ENCODE measurements at regions of chr7 and their contacts with region 1.

Region 1: DNA sequence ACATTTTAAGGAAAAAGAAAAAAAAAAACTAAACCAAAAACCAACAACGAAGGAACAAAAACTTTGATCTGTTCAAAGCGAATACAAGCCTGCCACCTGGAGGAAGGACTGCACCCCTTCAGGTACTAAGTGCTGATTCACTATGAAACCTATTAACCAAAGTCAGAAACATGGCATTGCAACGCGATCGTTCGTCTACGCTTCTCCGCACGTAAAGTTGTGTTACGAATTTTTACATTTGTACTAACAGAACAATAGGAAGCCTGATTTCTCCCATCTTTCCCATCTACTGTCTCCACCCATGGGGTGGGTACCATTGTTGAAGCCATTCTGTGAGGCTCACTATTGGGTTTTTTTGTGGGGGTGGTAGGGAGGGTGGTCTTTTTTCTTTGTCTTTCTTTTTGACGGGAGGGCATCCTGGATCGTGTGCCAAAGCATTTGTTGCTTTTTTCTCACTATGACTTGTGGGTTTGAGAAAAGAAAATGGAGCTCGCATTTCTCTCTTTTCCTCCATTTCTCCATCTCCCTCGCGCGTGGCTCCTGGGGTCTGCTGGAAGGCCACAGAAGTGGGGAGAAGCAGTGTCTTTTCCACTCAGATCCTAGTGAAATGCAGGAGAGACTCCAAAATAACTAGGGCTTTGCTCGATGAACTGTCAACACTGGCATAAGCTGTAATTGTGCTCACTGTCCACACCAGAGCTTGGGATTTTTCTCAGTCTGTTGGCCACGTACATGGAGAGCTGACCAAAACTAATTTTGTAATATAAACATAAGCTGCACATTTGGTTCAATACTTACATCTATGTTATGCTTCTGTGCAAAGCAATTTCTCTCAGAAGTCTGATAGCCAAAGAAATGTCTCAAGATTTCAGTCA is 100.9 kb upstream of the YAE1 start:
- ATAC-seq: peak in 7 of 8 experiments; percentile 43 to 88 (median 60)
- H3K4me3 ChIP-seq: no peak overlapping the region
- H3K27ac ChIP-seq: no peak overlapping the region
- H3K4me1 ChIP-seq: peaks cover 2 to 9% of the 10 kb centered on the region in 2 donors

Region 2: GRCh38 chr7:38796626-38797501 is 668.4 kb before region 1 on chr7:
- in situ Hi-C with region 1: loop called in 1 of 9 experiments (anchors 25 kb)
- ATAC-seq: peak in 3 of 8 experiments; percentile 44 to 51 (median 49)
- H3K4me3 ChIP-seq: no peak overlapping the region
- H3K27ac ChIP-seq: no peak overlapping the region
- H3K4me1 ChIP-seq: no peaks in the 10 kb centered on the region

Region 3: DNA sequence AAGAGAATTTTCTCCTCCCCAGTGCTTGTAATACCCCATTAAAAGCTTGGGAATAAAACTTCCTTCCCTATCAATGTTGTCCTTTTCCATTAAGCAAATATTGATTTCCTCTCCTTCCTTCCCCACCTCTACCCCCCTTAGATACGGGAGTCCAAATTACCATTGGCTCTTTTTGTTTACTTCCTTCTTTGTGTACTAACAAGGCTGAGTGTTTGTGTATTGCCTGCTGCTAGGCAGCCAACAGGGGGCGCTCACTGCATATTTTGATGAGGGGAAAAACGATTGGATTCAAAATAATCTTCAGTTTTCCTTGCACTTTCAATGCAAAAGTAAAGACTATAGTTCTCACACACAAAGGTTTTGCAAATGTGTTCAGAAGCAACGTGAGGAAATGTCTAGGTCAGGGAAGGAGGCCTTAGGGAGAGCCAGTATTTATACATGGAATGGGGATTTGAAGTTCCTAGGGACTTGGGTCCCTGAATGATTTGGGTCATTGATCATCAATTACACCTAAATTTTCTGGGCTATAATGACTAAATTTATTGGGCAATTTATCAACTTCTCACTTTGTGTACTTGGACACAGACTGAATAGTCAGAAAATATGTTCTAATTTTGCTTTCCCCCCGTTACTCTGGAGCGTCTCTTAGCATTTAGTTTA is 532.7 kb before region 1 on chr7:
- in situ Hi-C with region 1: loop called in 6 of 9 experiments (anchors 10 to 25 kb)
- ATAC-seq: peak in 7 of 8 experiments; percentile 23 to 82 (median 52)
- H3K4me3 ChIP-seq: no peak overlapping the region
- H3K27ac ChIP-seq: no peak overlapping the region
- H3K4me1 ChIP-seq: peaks cover 8 to 15% of the 10 kb centered on the region in 2 donors

Region 4: DNA sequence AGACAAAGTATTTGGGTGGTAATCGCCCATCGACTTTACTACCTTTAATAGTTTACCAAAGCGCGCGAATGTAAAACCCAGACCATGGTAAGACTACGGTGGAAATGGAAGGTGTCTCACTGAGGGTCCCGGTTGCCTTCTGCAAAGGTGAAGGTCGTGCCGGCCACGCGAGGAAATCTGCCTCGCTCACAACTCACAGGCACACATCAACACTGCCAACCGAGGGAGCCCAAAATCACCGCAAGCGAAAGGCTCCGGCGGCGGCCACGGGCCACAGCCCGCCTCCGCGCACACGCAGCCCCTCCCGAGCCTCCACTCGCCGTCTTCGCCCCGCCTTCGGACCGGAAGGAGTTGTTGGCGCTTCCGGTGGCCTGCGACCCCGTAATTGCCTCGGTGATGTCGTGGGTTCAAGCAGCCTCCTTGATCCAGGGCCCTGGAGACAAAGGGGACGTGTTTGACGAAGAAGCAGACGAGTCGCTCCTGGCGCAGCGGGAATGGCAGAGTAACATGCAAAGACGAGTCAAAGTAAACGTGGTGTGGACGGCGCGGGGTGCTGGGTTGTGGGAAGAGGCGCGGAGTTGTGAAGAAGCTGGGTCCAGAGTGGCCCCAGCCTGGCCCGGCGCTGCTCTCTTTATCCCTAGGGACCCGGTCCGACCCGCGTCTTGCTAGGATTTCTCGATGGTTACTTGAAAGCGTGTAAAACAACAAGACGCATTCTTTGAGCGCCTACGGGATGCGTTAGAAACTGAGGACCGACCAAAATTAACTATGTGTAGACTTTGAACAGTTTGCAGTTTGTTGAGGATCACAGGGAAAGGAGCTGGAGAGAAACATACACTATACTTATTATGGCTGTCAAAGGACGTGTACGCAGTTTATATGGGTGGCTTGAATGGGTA is 101.0 kb after region 1 on chr7 and contains the start of gene YAE1:
- in situ Hi-C with region 1: no loop called
- ATAC-seq: peak; percentile 96 to 98 (median 98)
- H3K4me3 ChIP-seq: peak within 1 kb of the TSS; percentile 67 to 94 (median 73)
- H3K27ac ChIP-seq: peak within 1 kb of the TSS; percentile 91 to 94
- H3K4me1 ChIP-seq: peaks cover 6 to 12% of the 10 kb centered on the region in 2 donors
- total RNA-seq, gene YAE1: 31.5 to 61.3 (median 45.2) TPM

Measured in motor neuron (in vitro differentiated cells).